ENCODE measurements at regions of chr11 and their contacts with region 1.

Region 1: GRCh38 chr11:67082035-67082791 is 25.6 kb downstream of the RHOD start:
- DNase-seq: no peak
- H3K4me3 Mint-ChIP-seq: no peak overlapping the region
- H3K27ac Mint-ChIP-seq: no peak overlapping the region
- H3K4me1 Mint-ChIP-seq: peaks cover 13% of the 10 kb centered on the region
- H3K27me3 Mint-ChIP-seq: no peaks in the 10 kb centered on the region

Region 2: GRCh38 chr11:67111261-67111660 is 29.0 kb after region 1 on chr11:
- intact Hi-C with region 1: no loop called
- DNase-seq: no peak
- H3K4me3 Mint-ChIP-seq: no peak overlapping the region
- H3K27ac Mint-ChIP-seq: no peak overlapping the region
- H3K4me1 Mint-ChIP-seq: no peaks in the 10 kb centered on the region
- H3K27me3 Mint-ChIP-seq: peaks cover 10% of the 10 kb centered on the region

Region 3: GRCh38 chr11:67167715-67168114 is 85.5 kb after region 1 on chr11:
- intact Hi-C with region 1: loop called (anchors 1 kb)
- DNase-seq: no peak
- H3K4me3 Mint-ChIP-seq: no peak overlapping the region
- H3K27ac Mint-ChIP-seq: no peak overlapping the region
- H3K4me1 Mint-ChIP-seq: peaks cover 37% of the 10 kb centered on the region
- H3K27me3 Mint-ChIP-seq: no peaks in the 10 kb centered on the region

Region 4: GRCh38 chr11:67252831-67253239 is 170.6 kb after region 1 on chr11:
- intact Hi-C with region 1: no loop called
- DNase-seq: no peak
- H3K4me3 Mint-ChIP-seq: no peak overlapping the region
- H3K27ac Mint-ChIP-seq: peak overlapping the region; percentile 30
- H3K4me1 Mint-ChIP-seq: peaks cover 55% of the 10 kb centered on the region
- H3K27me3 Mint-ChIP-seq: no peaks in the 10 kb centered on the region

Region 5: DNA sequence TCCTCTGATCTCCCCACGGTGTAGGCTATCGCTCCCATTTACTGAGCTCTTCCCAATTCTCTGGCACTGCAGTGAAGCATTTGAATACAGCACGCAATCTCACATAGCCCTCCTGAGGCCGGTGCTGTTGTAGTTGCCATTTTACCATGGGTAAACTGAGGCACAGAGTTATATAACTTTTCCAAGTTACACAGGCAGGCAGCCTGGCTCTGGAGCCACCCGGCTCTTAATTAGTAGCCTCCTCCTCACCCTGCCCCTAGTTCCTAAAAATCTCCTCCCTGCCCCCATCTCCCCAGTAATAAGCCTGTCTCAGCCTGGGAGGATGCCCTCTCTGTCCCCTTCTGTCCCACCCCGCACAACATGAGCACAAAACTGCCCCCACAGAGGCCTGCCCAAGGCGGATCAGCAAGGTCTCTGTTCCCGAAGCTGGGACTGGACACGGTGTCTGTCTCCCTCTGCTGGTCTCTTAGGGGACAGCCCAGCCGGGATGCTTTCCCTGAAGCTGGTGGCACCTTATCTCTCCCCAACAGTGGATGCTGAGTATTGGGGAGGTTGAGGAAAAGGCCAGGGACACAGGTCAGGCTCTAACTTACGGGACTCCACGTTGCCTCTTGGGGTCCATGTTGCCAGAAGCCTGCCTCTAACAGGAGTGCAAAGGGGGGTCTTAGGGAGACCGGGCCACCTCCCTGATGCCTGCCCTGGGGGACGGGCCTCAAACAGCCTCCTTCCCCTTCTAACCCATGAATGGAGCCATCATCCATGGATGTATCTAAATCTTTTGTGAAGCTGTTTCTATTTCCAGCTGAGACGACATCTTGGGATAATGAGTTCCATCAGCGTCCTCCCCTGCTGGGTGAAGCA is 300.3 kb after region 1 on chr11:
- intact Hi-C with region 1: loop called (anchors 1 kb)
- DNase-seq: peak; percentile 74
- H3K4me3 Mint-ChIP-seq: no peak overlapping the region
- H3K27ac Mint-ChIP-seq: no peak overlapping the region
- H3K4me1 Mint-ChIP-seq: peaks cover 5% of the 10 kb centered on the region
- H3K27me3 Mint-ChIP-seq: peaks cover 38% of the 10 kb centered on the region

Measured in activated T-helper 1 cell treated with anti-CD3 and anti-CD28 coated beads, Interleukin-12 subunit alpha, Interleukin-12 subunit beta, Interleukin-2, Interleukin-4 antibody, amounts not matched to agents 30 ng/mL and 10 ng/mL and 1 ng/mL, durations not matched to agents 14 hours and 24 hours and 36 hours (primary cell).